Posterior vena cava (tissue), 2 donors: ENCODE measurements at regions of chr5 and their contacts with region 1.

Region 1: DNA sequence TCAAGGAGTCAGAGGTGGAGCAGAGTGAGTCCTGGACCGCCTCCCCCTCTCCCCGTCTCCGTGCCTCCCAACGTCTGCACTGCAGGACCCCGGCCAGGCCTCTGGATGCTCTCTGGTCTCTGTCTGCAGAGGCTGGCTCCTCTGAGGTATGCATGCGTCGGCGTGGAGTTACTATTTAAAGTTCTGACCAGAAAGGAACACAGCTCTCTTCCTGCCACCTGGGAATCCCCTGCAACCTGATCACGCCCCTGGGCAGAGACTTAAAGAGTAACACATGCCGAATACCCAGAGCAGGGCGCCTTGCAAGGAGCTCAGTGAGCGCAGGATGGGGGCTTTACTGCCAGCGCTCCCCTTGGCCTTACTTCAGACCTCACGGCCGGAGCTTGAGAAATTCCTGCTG is 16.0 kb downstream of the ANXA6 start:
- DNase-seq: no peak

Region 2: GRCh38 chr5:151184316-151185055 is 43.0 kb after region 1 on chr5:
- intact Hi-C with region 1: loop called in 1 of 2 experiments (anchors 1 kb)
- DNase-seq: no peak